Endothelial cell of umbilical vein (primary cell): ENCODE measurements at regions of chr5 and their contacts with region 1.

Region 1: DNA sequence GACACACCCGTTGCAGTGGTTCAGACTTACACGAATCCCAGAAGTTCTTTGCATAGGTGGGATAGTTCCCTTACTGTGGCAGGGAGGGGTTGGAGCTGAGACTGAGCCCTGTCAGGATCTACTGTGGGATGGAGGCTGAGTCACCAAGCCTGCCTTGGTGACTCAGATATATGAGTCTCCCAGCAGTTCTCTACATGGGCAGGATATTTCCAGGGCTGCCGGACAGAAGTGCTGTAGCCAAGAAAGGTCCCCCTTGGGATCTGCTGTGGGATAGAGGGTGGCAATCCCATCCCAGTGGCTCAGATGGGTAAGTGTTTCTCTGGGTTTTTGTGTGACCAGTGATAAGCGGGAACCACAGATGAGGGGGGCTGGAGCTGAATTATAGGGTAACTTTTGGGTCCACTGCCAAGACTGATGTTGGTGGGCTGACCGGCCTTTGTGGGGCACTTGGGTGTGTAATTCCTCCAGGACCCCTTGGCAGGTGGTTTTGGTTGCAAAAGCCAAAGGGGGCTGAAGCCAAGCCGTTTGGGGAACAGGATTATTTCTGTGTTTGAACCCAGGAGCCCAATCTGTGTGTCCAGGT is 18.7 kb downstream of the XRCC4 start:
- DNase-seq: peak; percentile 51
- H3K4me3 ChIP-seq: no peak overlapping the region
- H3K27ac ChIP-seq: no peak overlapping the region
- H3K4me1 ChIP-seq: peaks cover 16% of the 10 kb centered on the region
- H3K27me3 ChIP-seq: peaks cover 17 to 24% of the 10 kb centered on the region in 2 experiments
- CTCF ChIP-seq: no peak
- POLR2A ChIP-seq: no peak

Region 2: DNA sequence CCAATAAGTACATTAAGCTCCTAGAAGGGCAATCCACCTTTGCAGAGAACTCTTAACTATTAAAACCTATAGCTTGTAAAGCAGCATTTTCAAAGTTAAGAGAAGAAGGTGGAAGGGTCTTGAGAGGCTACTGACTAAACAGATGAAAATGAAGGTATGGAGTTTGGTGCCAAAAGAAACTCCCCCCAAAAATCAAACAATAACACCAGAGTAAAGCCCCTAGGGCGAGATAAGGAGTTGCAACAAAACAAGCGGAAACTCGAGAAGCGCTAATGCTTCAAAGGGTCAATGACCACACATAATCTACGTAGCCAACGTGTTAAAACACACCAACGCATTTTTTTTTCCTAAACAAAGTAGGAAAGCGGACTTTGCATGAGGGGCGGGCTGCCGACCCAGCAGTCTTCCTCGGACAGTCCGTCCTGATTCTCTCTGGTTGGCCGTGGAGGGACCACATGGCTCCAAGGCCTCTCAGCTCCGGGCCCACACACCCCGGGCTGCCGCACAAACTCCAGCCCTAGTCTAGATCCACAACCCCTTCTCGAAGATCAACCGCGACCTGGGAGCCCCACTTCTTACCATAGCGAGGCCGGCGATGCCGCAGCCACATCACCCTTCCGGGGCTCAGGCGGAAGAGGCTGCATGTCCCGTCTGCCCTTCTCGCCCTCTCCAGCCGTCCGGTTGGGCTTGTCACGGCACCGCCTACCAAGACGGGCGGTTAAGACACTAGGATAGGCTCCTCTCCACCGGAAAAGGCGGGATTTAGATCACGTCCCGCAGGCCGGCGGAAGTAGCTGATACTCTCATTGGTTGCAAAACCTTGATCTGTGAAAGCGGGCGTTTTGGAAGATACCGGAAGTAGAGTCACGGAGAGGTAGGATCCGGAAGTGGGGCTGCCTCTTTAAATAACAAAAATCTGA is 19.0 kb before region 1 on chr5 and contains the starts of genes TMEM167A and XRCC4:
- CTCF ChIA-PET with region 1: interaction called, 3 read pairs
- POLR2A ChIA-PET with region 1: no interaction called
- dilution Hi-C with region 1: no loop called
- intact Hi-C with region 1: loop called (anchors 1 kb)
- DNase-seq: peak; percentile 97
- H3K4me3 ChIP-seq: peak within 1 kb of the TSS; percentile 69 to 98 (median 93)
- H3K27ac ChIP-seq: peak within 1 kb of the TSS; percentile 85
- H3K4me1 ChIP-seq: peaks cover 14% of the 10 kb centered on the region
- H3K27me3 ChIP-seq: no peaks in the 10 kb centered on the region
- CTCF ChIP-seq: no peak
- POLR2A ChIP-seq: peak; percentile 77
- total RNA-seq, gene TMEM167A: 64.4 and 69.4 TPM in 2 replicates
- total RNA-seq, gene XRCC4: 7.6 and 7.7 TPM in 2 replicates